Activated naive CD4-positive, alpha-beta T cell treated with anti-CD3 and anti-CD28 coated beads, Interleukin-2, amount 10 ng/mL, durations not matched to agents 7 days and 5 days (primary cell): ENCODE measurements at regions of chr5 and their contacts with region 1.

Region 1: GRCh38 chr5:176447982-176448608 is at the start of gene FAF2:
- DNase-seq: peak; percentile 96
- H3K4me3 Mint-ChIP-seq: peak within 1 kb of the TSS; percentile 99
- H3K27ac Mint-ChIP-seq: peak within 1 kb of the TSS; percentile 96
- H3K4me1 Mint-ChIP-seq: peaks cover 36% of the 10 kb centered on the region
- H3K27me3 Mint-ChIP-seq: peaks cover 20% of the 10 kb centered on the region

Region 2: DNA sequence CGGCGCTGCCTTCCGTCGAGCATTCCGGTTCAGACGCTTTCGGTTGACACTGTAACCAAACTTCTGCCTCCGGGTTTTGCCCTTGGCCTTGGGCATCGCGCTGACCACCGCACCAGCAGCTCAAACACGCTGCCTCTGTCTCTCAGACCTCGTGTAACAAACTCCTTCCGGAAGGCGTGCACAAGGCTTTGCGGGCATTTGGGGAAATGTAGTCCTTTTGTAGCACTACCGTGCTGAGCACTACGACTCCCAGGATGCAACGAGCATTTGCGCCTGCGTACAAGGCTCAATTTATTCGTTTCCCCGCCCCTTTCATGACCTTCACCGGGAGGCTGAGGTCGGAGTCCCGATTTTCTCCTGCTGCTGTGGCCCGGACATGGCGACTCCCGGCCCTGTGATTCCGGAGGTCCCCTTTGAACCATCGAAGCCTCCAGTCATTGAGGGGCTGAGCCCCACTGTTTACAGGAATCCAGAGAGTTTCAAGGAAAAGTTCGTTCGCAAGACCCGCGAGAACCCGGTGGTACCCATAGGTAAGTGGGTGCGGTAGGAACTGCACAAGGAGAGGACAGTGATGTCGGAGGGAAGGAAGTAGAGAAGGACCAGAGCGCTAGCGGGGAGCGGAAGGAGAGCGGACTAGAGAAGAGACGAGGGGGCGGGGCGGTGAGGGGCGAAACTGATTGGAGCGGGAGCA is 59.5 kb before region 1 on chr5 and contains the starts of genes HIGD2A and NOP16:
- CTCF ChIA-PET with region 1: no interaction called
- DNase-seq: peak; percentile 100
- H3K4me3 Mint-ChIP-seq: peak within 1 kb of the TSS; percentile 88
- H3K27ac Mint-ChIP-seq: peak within 1 kb of the TSS; percentile 99
- H3K4me1 Mint-ChIP-seq: peaks cover 34% of the 10 kb centered on the region
- H3K27me3 Mint-ChIP-seq: no peaks in the 10 kb centered on the region

Region 3: DNA sequence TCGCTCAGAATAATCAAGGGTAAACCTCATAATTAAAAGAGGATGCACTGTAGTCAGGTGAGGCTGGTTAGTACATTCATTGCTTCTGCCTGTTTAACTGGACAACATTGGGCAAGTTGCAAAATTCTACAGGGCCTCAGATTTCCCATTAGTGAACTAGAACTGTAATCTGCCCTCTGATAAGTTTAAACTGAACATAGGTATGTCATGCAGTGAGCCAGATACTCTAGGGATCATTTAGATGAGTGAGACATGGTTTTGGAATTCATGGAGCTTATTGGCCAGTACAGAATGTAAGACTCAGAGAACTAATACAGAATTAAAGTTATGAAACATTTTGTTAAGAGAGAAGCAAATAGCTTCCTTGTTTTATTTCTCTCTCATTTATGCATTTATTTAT is 53.2 kb after region 1 on chr5:
- CTCF ChIA-PET with region 1: no interaction called
- DNase-seq: no peak
- H3K4me3 Mint-ChIP-seq: no peak overlapping the region
- H3K27ac Mint-ChIP-seq: no peak overlapping the region
- H3K4me1 Mint-ChIP-seq: no peaks in the 10 kb centered on the region
- H3K27me3 Mint-ChIP-seq: no peaks in the 10 kb centered on the region

Region 4: GRCh38 chr5:176536132-176536901 is 88.2 kb after region 1 on chr5:
- CTCF ChIA-PET with region 1: interaction called, 11 read pairs
- DNase-seq: peak; percentile 93
- H3K4me3 Mint-ChIP-seq: peak overlapping the region; percentile 96
- H3K27ac Mint-ChIP-seq: peak overlapping the region; percentile 100
- H3K4me1 Mint-ChIP-seq: peaks cover 67% of the 10 kb centered on the region
- H3K27me3 Mint-ChIP-seq: no peaks in the 10 kb centered on the region

Region 5: GRCh38 chr5:176810084-176810597 is 362.0 kb after region 1 on chr5 and contains the start of gene UNC5A:
- CTCF ChIA-PET with region 1: no interaction called
- DNase-seq: peak; percentile 64
- H3K4me3 Mint-ChIP-seq: peak within 1 kb of the TSS; percentile 66
- H3K27ac Mint-ChIP-seq: no peak within 1 kb of the TSS
- H3K4me1 Mint-ChIP-seq: peaks cover 14% of the 10 kb centered on the region
- H3K27me3 Mint-ChIP-seq: peaks cover 91% of the 10 kb centered on the region